ENCODE measurements at regions of chr22 and their contacts with region 1.

Region 1: GRCh38 chr22:38143036-38143697 is 32.7 kb upstream of the BAIAP2L2 start:
- DNase-seq: peak; percentile 69
- H3K4me3 Mint-ChIP-seq: no peak overlapping the region
- H3K27ac Mint-ChIP-seq: peak overlapping the region; percentile 79
- H3K4me1 Mint-ChIP-seq: peaks cover 31% of the 10 kb centered on the region
- H3K27me3 Mint-ChIP-seq: no peaks in the 10 kb centered on the region

Region 2: DNA sequence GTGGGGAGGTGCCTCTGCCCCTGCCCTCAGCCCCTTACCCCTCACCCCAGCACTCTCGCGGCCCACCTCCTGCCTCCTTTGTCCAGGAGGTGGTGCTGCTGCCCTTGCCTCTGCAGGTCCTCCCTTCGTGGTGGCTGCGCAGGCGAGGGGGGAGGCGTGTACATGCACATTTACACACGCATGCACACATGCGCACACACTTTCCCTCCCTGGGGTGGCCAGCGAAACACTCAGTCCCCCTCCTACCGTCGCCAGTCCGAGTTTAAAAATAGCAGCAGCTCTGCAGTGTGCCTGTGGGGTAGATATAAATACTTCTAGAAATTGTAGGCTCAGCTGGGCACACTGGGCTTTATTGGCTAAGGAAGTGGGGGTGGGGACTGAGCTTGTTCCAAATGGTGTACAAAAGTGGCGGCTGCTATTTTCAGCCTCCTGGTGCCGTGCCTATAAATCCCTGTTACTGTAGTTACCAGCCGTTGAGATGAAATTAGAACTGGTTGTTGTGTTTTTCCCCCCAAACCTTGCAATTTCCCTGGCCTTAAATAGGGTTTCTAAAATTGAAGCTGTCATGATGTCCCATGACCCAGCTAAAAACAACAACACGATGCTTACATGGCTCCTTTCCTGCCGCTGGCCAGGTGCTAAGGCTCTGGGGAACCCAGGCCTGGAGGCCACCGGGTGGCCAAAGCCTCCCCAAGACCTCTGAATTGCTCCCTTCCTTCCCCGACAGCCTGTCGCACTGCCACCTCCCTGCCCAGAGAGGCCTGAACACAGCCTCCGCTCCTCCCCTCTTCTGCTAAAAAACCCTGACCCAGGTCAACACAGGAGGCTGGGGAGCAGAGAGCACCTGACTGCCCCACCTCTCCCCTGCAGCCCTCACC is 73.6 kb before region 1 on chr22:
- CTCF ChIA-PET with region 1: no interaction called
- POLR2A ChIA-PET with region 1: no interaction called
- DNase-seq: no peak
- H3K4me3 Mint-ChIP-seq: no peak overlapping the region
- H3K27ac Mint-ChIP-seq: no peak overlapping the region
- H3K4me1 Mint-ChIP-seq: no peaks in the 10 kb centered on the region
- H3K27me3 Mint-ChIP-seq: no peaks in the 10 kb centered on the region

Region 3: GRCh38 chr22:38114484-38115398 is 28.4 kb before region 1 on chr22:
- CTCF ChIA-PET with region 1: interaction called, 11 read pairs
- POLR2A ChIA-PET with region 1: interaction called, 4 read pairs
- DNase-seq: peak; percentile 85
- H3K4me3 Mint-ChIP-seq: no peak overlapping the region
- H3K27ac Mint-ChIP-seq: no peak overlapping the region
- H3K4me1 Mint-ChIP-seq: peaks cover 8% of the 10 kb centered on the region
- H3K27me3 Mint-ChIP-seq: no peaks in the 10 kb centered on the region

Region 4: DNA sequence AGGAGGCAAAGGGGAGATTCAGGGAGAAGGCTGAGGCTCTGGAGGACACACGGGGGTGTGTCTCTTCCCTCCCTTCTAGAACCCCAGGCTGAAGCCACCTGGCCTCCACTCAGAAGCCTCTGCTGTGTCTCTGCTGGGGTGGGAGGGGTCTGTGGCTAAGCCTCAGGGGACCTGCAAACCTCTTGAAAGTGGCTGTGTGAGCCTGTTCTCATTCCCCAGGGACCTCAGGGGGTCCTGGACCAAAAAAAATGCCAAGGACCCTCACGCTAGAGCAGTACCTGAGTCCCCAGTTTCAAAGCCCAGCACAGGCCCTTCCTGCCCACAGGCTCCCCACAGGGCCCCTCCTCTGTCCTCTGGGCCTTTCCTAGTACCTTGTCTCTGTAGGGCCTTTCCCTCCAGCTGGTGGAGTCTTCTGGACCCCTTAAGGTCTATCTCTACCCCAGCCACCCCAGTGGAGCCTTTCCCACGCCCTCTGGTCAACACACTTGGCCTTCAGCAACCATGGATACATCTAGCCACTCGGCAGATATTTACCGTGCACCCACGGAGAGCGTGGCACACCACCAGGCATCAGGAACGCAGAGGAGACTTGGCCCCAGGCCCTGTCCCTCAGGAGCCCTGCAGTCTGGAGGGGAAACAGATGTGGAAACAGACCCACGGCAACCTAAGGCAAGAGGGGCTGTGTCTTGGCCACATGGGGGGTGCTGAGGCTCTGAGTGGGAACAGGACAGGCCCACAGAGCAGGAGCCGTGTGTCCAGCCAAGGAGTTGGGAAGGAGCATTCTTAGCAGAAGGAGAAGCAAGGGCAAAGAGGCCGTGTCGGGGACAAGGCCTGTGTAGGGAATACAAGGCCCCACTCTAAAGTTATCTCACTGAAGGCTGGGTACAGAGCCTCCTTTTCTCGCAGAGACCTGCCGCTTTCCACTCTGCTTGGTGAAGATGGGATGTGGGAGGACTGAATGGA is 20.0 kb after region 1 on chr22:
- CTCF ChIA-PET with region 1: no interaction called
- POLR2A ChIA-PET with region 1: no interaction called
- DNase-seq: no peak
- H3K4me3 Mint-ChIP-seq: no peak overlapping the region
- H3K27ac Mint-ChIP-seq: no peak overlapping the region
- H3K4me1 Mint-ChIP-seq: peaks cover 18% of the 10 kb centered on the region
- H3K27me3 Mint-ChIP-seq: no peaks in the 10 kb centered on the region

Measured in activated CD4-positive, alpha-beta memory T cell treated with anti-CD3 and anti-CD28 coated beads, Interleukin-2, amount 10 ng/mL, durations not matched to agents 7 days and 5 days (primary cell).